Activated CD4-positive, alpha-beta T cell treated with anti-CD3 and anti-CD28 coated beads for 36 hours (primary cell): ENCODE measurements at regions of chr15 and their contacts with region 1.

Region 1: GRCh38 chr15:74873036-74873755 is at the start of gene SCAMP2:
- DNase-seq: peak; percentile 94
- ATAC-seq: peak; percentile 84
- H3K4me3 Mint-ChIP-seq: peak within 1 kb of the TSS; percentile 87
- H3K27ac Mint-ChIP-seq: peak within 1 kb of the TSS; percentile 87
- H3K4me1 Mint-ChIP-seq: peaks cover 48% of the 10 kb centered on the region
- H3K27me3 Mint-ChIP-seq: no peaks in the 10 kb centered on the region
- total RNA-seq, gene SCAMP2: 61.6 to 83.4 TPM

Region 2: GRCh38 chr15:74620636-74621545 is 252.3 kb before region 1 on chr15:
- CTCF ChIA-PET with region 1: no interaction called
- POLR2A ChIA-PET with region 1: no interaction called
- intact Hi-C with region 1: no loop called
- DNase-seq: peak; percentile 90
- ATAC-seq: peak; percentile 97
- H3K4me3 Mint-ChIP-seq: no peak overlapping the region
- H3K27ac Mint-ChIP-seq: peak overlapping the region; percentile 80
- H3K4me1 Mint-ChIP-seq: peaks cover 46% of the 10 kb centered on the region
- H3K27me3 Mint-ChIP-seq: no peaks in the 10 kb centered on the region

Region 3: GRCh38 chr15:74857712-74858368 is 15.4 kb before region 1 on chr15:
- CTCF ChIA-PET with region 1: interaction called, 6 read pairs
- POLR2A ChIA-PET with region 1: interaction called, 12 read pairs
- intact Hi-C with region 1: no loop called
- DNase-seq: no peak
- ATAC-seq: peak; percentile 86
- H3K4me3 Mint-ChIP-seq: no peak overlapping the region
- H3K27ac Mint-ChIP-seq: peak overlapping the region; percentile 85
- H3K4me1 Mint-ChIP-seq: peaks cover 34% of the 10 kb centered on the region
- H3K27me3 Mint-ChIP-seq: no peaks in the 10 kb centered on the region

Region 4: GRCh38 chr15:74889883-74890664 is 16.9 kb after region 1 on chr15 and contains the start of gene MPI:
- CTCF ChIA-PET with region 1: no interaction called
- POLR2A ChIA-PET with region 1: interaction called, 5 read pairs
- intact Hi-C with region 1: loop called (anchors 1 to 2 kb)
- DNase-seq: peak; percentile 95
- ATAC-seq: peak; percentile 98
- H3K4me3 Mint-ChIP-seq: peak within 1 kb of the TSS; percentile 73
- H3K27ac Mint-ChIP-seq: peak within 1 kb of the TSS; percentile 86
- H3K4me1 Mint-ChIP-seq: peaks cover 46% of the 10 kb centered on the region
- H3K27me3 Mint-ChIP-seq: no peaks in the 10 kb centered on the region
- total RNA-seq, gene MPI: 75.7 to 93.3 TPM